ENCODE measurements at regions of chr2 and their contacts with region 1.

Region 1: GRCh38 chr2:176001916-176002687 is at the start of gene LNPK:
- DNase-seq: peak; percentile 73 to 96
- H3K4me3 ChIP-seq: peak within 1 kb of the TSS; percentile 73 to 91
- H3K27ac ChIP-seq: peak within 1 kb of the TSS; percentile 82 to 85
- H3K4me1 ChIP-seq: peaks cover 0 to 6% of the 10 kb centered on the region in 2 donors
- H3K27me3 ChIP-seq: no peaks in the 10 kb centered on the region
- CTCF ChIP-seq: no peak
- total RNA-seq, gene LNPK: 7.1 TPM

Region 2: GRCh38 chr2:175855794-175856453 is 146.2 kb before region 1 on chr2:
- intact Hi-C with region 1: loop called (anchors 5 kb)
- DNase-seq: peak; percentile 57 to 88
- H3K4me3 ChIP-seq: peak overlapping the region in 1 of 2 donors; percentile 44
- H3K27ac ChIP-seq: peak overlapping the region; percentile 80 to 88
- H3K4me1 ChIP-seq: peaks cover 3 to 8% of the 10 kb centered on the region in 2 donors
- H3K27me3 ChIP-seq: no peaks in the 10 kb centered on the region
- CTCF ChIP-seq: no peak

Measured in ascending aorta (tissue), 2 donors.